Endothelial cell of umbilical vein (primary cell): ENCODE measurements at regions of chr17 and their contacts with region 1.

Region 1: DNA sequence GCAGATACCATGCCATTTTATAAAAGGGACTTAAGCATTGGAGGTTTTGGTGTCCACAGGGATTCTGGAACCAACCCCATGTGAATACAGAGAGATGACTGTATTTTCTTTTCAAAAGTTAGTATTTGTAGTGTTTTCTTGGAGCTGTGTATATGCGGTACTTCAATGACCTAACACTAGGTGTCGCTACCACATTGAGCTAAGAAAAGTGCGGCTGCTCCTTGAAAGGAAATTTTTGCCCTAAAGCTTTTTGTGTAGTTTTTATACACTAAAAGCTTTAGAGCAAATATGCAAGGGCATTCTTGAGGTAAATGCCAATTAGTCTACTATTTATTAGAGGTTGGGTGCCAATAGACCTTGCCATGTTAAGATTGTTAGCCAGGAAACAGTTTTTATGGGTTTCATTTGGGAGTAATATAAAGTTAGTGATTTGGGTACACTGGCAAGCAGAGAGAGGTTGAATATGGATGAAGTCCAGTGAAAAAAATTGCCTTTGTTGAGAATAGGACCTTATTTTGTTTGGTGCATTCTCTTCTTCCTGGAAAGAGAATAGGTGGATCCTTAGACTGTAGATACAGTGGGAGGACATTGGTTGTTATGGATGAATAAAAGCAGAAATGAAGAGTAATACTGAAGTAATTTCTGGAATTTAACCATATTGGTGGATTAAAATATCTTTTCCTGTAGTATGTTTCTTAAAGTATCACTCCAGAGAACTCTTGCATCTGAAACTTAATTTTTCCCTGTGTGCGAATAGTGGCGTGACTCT is 43.3 kb downstream of the BCAS3 start:
- DNase-seq: peak; percentile 68
- H3K4me3 ChIP-seq: no peak overlapping the region
- H3K27ac ChIP-seq: no peak overlapping the region
- H3K4me1 ChIP-seq: no peaks in the 10 kb centered on the region
- H3K27me3 ChIP-seq: no peaks in the 10 kb centered on the region
- CTCF ChIP-seq: peak; percentile 73 to 76
- POLR2A ChIP-seq: no peak

Region 2: GRCh38 chr17:60704170-60704569 is 16.8 kb before region 1 on chr17:
- CTCF ChIA-PET with region 1: interaction called, 13 read pairs
- POLR2A ChIA-PET with region 1: no interaction called
- dilution Hi-C with region 1: no loop called
- intact Hi-C with region 1: no loop called
- DNase-seq: peak; percentile 67
- H3K4me3 ChIP-seq: no peak overlapping the region
- H3K27ac ChIP-seq: no peak overlapping the region
- H3K4me1 ChIP-seq: no peaks in the 10 kb centered on the region
- H3K27me3 ChIP-seq: no peaks in the 10 kb centered on the region
- CTCF ChIP-seq: no peak
- POLR2A ChIP-seq: no peak

Region 3: DNA sequence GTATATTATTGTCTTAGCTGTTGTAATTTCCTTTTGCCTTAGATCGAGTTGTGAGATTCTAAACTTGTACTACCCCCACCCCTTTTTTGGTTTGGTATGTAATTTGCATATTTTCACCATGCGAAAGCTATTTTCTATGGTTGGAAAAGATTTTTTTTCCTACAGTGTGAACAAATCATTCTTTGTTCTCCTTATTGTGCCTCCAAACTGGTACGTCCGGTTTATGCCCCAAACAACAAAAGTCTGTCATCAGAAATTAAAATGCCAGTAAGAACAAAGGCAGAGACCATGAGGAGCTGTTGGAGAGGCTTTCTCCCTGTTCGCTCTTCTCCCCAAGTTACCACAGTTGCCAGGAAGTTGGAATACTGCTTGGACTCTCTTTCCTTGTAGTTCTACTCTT is 22.9 kb after region 1 on chr17:
- CTCF ChIA-PET with region 1: interaction called, 14 read pairs
- POLR2A ChIA-PET with region 1: no interaction called
- dilution Hi-C with region 1: no loop called
- intact Hi-C with region 1: no loop called
- DNase-seq: peak; percentile 51
- H3K4me3 ChIP-seq: no peak overlapping the region
- H3K27ac ChIP-seq: peak overlapping the region; percentile 10
- H3K4me1 ChIP-seq: peaks cover 4% of the 10 kb centered on the region
- H3K27me3 ChIP-seq: no peaks in the 10 kb centered on the region
- CTCF ChIP-seq: no peak
- POLR2A ChIP-seq: no peak

Region 4: GRCh38 chr17:60971515-60972369 is 250.8 kb after region 1 on chr17:
- CTCF ChIA-PET with region 1: interaction called, 31 read pairs
- POLR2A ChIA-PET with region 1: no interaction called
- dilution Hi-C with region 1: no loop called
- intact Hi-C with region 1: no loop called
- DNase-seq: peak; percentile 56
- H3K4me3 ChIP-seq: no peak overlapping the region
- H3K27ac ChIP-seq: no peak overlapping the region
- H3K4me1 ChIP-seq: no peaks in the 10 kb centered on the region
- H3K27me3 ChIP-seq: no peaks in the 10 kb centered on the region
- CTCF ChIP-seq: peak; percentile 57 to 69
- POLR2A ChIP-seq: no peak

Region 5: GRCh38 chr17:60993497-60993896 is 272.6 kb after region 1 on chr17:
- CTCF ChIA-PET with region 1: interaction called, 9 read pairs
- POLR2A ChIA-PET with region 1: no interaction called
- dilution Hi-C with region 1: no loop called
- intact Hi-C with region 1: loop called (anchors 10 kb)
- DNase-seq: no peak
- H3K4me3 ChIP-seq: no peak overlapping the region
- H3K27ac ChIP-seq: no peak overlapping the region
- H3K4me1 ChIP-seq: peaks cover 5% of the 10 kb centered on the region
- H3K27me3 ChIP-seq: no peaks in the 10 kb centered on the region
- CTCF ChIP-seq: no peak
- POLR2A ChIP-seq: no peak

Region 6: DNA sequence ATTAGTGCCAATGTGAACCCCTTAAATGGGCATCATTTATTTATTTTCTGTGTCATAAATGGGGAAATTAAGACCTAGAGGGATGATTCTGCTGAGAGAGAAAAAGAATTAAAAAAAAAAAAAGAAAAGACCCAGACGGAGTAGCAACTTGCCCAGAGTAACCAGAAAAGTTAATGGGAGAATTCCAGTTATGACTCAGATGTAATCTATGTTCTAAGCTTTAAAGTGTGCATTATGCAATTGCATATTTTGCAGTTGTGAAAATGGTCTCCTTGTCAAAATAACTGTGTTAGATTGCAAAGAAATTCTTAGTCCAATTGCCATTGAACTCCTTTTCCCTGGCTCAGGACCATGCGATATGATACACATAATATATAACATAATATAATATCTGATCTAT is 640.1 kb after region 1 on chr17:
- CTCF ChIA-PET with region 1: interaction called, 11 read pairs
- POLR2A ChIA-PET with region 1: no interaction called
- dilution Hi-C with region 1: no loop called
- intact Hi-C with region 1: no loop called
- DNase-seq: no peak
- H3K4me3 ChIP-seq: no peak overlapping the region
- H3K27ac ChIP-seq: no peak overlapping the region
- H3K4me1 ChIP-seq: no peaks in the 10 kb centered on the region
- H3K27me3 ChIP-seq: peaks cover 4 to 12% of the 10 kb centered on the region in 2 experiments
- CTCF ChIP-seq: no peak
- POLR2A ChIP-seq: no peak

Region 7: DNA sequence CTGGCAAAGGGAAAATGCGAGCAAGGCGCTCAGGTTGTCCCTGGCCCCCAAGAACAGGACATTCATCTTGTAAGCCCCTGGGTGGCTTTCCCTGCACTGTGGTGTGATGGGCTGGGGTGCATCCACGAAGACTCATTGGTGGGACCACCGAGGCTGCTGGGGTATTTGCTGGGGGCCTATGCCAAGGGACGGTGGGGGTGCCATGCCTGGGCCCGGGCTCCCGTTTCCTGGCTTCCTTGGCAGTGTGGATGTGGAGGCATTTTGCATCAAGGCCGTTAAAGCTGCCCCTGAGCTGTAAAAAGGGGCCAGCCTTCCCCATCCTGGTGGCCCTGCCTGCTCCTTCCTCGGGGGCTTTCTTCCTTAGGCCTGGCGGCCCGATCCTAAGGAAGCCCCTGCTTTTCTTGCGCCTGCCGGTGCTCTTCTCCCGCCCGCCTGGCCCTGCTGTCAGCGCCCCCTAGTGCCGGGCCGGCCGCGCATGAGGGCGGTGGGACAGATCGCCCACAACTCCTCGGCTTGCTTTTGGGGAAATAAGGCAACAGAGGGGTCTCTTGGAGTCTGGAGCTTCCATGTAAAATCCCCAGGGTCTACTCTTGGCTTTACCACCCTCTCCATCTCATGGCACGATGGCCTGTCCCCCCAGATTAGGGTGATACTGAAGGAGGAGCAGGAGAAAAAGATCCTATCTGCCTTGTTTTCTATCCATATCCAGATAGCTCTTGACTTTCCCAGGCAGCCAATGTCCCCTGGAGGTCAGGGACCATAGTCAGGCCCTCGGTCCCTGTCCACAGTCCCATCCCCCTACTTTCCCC is 668.9 kb after region 1 on chr17:
- CTCF ChIA-PET with region 1: interaction called, 11 read pairs
- POLR2A ChIA-PET with region 1: no interaction called
- dilution Hi-C with region 1: no loop called
- intact Hi-C with region 1: loop called (anchors 1 kb)
- DNase-seq: peak; percentile 39
- H3K4me3 ChIP-seq: no peak overlapping the region
- H3K27ac ChIP-seq: no peak overlapping the region
- H3K4me1 ChIP-seq: no peaks in the 10 kb centered on the region
- H3K27me3 ChIP-seq: peaks cover 7% of the 10 kb centered on the region in 2 experiments
- CTCF ChIP-seq: peak; percentile 93 to 94
- POLR2A ChIP-seq: no peak